ENCODE measurements at regions of chr16 and their contacts with region 1.

Region 1: DNA sequence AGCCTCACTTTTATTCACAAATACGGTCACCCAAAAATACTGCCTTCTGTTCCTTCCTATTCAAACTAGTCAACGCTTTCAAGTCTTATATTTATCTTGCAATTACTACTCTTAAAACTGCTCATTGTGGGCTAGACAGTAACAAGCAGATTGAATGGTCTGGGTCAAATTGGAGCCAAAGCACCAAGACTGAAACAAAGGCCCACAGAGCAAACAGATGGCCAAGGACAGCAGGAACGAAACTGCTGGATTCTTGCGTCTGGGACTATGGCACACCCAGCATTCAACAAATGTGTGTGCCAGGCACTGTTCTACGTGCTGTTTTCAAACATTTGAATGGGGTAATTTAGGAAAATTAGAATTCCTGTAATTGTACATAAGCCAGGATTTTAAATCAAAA is 250.1 kb upstream of the PSMD7 start:
- DNase-seq: no peak
- H3K4me3 Mint-ChIP-seq: no peak overlapping the region
- H3K27ac Mint-ChIP-seq: no peak overlapping the region
- H3K4me1 Mint-ChIP-seq: no peaks in the 10 kb centered on the region
- H3K27me3 Mint-ChIP-seq: peaks cover 23% of the 10 kb centered on the region
- CTCF ChIP-seq: no peak

Region 2: DNA sequence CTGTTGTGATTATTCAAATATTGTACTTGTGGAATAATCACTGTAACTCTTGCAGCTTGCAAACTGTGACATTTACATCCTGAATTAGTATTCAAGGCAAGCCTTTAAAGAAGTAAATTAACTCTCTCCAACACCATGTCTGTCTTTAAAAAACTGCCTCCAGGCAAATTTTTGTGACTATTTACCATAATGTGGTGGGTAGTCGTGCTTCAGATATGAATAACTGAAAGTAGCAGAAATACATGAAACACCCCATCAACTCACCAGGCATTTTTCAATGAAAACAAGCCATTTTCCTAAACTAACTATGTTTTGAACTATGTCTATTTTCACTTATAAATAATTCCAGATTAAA is 32.7 kb after region 1 on chr16:
- CTCF ChIA-PET with region 1: interaction called, 12 read pairs
- intact Hi-C with region 1: no loop called
- DNase-seq: no peak
- H3K4me3 Mint-ChIP-seq: no peak overlapping the region
- H3K27ac Mint-ChIP-seq: no peak overlapping the region
- H3K4me1 Mint-ChIP-seq: no peaks in the 10 kb centered on the region
- H3K27me3 Mint-ChIP-seq: peaks cover 48% of the 10 kb centered on the region
- CTCF ChIP-seq: no peak

Region 3: DNA sequence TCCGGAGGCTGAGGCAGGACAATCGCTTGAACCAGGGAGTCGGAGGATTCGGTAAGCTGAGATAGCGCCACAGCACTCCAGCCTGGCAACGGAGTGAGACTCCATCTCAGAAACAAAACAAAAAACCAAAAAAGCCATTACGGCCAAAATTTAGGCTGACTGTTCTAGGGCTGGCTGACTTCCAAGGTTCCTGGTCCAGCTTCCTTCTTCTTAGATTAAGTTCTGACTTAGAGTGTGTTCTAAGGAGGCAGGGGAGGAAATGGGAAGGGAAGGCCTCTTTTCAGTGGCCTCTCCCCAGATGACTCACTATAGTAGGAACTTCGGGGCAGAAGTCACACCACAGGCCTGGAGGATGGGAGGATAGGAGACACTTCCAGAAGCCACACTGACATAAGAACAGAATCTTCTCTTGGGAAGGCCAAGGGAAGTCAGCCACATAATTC is 402.5 kb after region 1 on chr16:
- CTCF ChIA-PET with region 1: no interaction called
- intact Hi-C with region 1: no loop called
- DNase-seq: peak; percentile 45
- H3K4me3 Mint-ChIP-seq: no peak overlapping the region
- H3K27ac Mint-ChIP-seq: no peak overlapping the region
- H3K4me1 Mint-ChIP-seq: peaks cover 18% of the 10 kb centered on the region
- H3K27me3 Mint-ChIP-seq: no peaks in the 10 kb centered on the region
- CTCF ChIP-seq: no peak

Measured in Calu3 (cell line).